Activated naive CD4-positive, alpha-beta T cell treated with anti-CD3 and anti-CD28 coated beads for 36 hours (primary cell): ENCODE measurements at regions of chr12 and their contacts with region 1.

Region 1: DNA sequence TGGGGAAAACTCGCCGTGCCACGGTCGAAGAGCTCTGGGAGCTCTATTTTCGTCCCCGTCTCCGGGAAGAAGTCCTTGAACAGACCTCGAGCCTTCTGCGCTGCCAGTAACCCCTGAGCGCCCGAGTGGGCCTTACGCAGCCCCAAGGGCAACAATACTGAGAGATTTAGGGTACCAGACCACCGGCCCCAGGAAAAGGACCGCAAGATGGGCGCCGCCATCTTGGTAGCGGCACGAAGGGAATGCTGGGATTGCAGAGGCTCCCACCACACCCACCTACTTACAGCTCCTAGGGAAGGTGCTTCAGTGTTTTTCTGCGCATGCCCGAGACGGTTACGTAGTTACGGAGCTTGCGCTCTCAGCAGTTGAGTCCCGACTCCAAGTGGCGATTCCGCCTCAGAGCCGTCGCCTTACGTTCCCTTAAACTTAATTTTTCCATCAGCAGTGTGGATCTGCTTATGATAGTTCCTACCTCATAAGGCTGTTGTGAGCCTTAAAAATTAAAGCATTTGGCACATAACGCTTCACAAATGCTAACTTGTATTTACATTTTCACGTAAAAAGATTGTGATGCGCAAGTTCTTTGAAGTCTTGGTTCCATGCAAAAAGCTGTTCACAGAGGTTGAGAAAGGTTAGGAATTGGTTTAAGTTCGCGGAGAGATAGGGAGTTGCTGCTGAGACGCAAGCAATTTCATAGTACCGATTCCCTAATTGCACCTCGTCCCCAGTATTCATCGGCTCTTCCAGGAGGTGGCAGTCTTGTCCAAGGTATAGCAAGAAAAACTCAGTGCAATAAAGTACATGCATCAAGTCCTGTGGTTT is at the start of gene YARS2:
- DNase-seq: peak; percentile 95
- H3K4me3 Mint-ChIP-seq: peak within 1 kb of the TSS; percentile 89
- H3K27ac Mint-ChIP-seq: peak within 1 kb of the TSS; percentile 92
- H3K4me1 Mint-ChIP-seq: peaks cover 16% of the 10 kb centered on the region
- H3K27me3 Mint-ChIP-seq: no peaks in the 10 kb centered on the region
- total RNA-seq, gene YARS2: 20.1 to 24.8 TPM

Region 2: DNA sequence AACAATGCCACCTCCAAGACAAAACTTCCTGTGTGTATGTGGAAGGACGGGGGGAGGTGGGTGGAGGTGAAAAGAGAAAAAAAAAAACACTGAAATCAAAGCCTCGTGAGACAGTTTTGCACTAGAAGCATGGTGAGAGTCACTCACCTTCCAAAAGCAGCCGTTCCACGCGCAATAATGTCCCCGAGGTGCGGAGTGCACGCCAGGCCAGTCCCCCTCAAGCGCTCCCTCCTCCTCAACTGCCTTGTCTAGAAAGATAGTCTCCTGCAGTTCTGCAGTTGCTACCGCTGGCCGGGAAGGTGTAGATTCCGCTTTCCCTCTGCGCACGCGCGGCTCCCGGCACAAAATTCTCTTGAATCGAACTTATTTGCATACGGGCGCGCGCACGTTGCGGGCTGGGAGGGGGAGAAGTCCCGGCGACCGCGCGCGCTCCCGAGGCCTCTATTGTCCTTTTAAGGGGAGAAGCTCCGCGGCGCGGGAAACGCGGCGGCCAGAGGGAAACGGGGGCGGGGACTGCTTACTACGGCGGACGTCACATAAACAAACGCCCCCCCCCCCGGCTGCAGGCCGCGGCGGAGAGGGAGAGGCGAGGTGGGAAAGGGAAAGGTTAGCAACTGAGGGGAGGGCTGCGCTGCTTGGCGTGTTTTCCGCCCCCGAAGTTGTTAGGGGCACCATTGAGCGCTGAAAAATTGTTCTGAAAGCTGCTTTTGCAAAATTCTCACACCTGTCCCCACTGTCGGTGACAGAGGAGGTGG is 1429.8 kb before region 1 on chr12 and contains the start of gene SINHCAF:
- CTCF ChIA-PET with region 1: no interaction called
- intact Hi-C with region 1: loop called (anchors 5 kb)
- DNase-seq: peak; percentile 99
- H3K4me3 Mint-ChIP-seq: peak within 1 kb of the TSS; percentile 96
- H3K27ac Mint-ChIP-seq: peak within 1 kb of the TSS; percentile 99
- H3K4me1 Mint-ChIP-seq: peaks cover 20% of the 10 kb centered on the region
- H3K27me3 Mint-ChIP-seq: no peaks in the 10 kb centered on the region
- total RNA-seq, gene SINHCAF: 158 to 169 TPM

Region 3: DNA sequence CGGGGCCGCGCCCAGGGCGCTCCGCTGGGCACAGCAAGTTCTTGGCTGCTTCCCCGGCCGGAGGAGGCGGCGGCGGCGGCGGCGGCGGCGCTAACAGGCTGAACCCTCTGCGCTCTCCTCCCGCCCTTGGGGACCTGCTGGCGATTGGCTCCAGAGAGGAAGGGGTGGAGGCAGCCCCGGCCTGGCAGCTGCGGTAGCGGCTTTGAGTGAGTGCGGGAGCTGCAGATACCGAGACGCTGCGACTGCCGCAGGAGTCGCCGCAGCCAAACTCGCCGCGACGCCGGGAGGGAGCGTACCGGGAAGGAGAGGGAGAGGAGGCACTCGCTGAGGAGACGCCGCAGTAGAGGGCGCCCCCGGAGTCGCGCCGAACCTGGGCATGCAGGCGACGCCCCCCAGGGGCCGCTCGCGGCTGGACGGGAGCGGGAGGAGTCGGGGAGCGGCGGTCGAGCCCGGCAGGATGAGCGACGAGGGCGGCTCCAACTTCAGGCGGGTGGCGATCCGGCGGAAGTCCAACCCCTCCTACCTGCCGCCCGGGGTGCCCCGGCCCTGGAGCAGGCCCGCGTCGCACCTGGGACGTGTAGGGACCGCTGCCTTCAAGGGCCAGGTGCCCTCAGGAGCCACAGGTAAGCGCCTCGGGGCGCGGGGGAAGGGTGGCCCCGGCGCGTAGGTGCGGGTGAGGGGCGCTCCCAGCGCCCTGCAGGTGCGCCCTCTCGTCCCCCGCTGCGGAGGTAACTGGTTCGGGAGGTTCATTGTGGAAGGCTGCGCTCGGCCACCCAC is 356.3 kb before region 1 on chr12 and contains the start of gene FGD4:
- CTCF ChIA-PET with region 1: no interaction called
- intact Hi-C with region 1: loop called (anchors 1 kb)
- DNase-seq: peak; percentile 76
- H3K4me3 Mint-ChIP-seq: peak within 1 kb of the TSS; percentile 88
- H3K27ac Mint-ChIP-seq: no peak within 1 kb of the TSS
- H3K4me1 Mint-ChIP-seq: no peaks in the 10 kb centered on the region
- H3K27me3 Mint-ChIP-seq: peaks cover 38% of the 10 kb centered on the region
- total RNA-seq, gene FGD4: 0.15 to 0.17 TPM

Region 4: DNA sequence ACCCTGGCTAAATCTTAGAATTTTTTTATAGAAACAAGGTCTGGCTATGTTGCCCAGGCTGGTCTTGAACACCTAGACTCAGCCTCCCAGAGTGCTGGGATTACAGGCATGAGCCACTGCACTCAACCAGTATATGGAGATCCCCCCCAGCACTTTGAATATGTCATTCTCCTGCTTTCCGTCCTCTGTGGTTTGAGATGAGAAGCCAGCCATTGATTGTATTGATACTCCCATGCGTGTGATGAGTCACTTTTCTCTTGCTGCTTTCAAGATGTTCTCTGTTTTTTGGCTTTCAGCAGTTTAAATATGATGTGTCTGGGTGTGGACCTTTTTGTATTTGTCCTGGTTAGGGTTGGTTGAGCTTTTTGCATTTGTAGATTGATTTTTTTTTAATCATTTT is 152.0 kb before region 1 on chr12:
- CTCF ChIA-PET with region 1: no interaction called
- intact Hi-C with region 1: loop called (anchors 1 kb)
- DNase-seq: peak; percentile 73
- H3K4me3 Mint-ChIP-seq: no peak overlapping the region
- H3K27ac Mint-ChIP-seq: peak overlapping the region; percentile 57
- H3K4me1 Mint-ChIP-seq: peaks cover 8% of the 10 kb centered on the region
- H3K27me3 Mint-ChIP-seq: no peaks in the 10 kb centered on the region

Region 5: DNA sequence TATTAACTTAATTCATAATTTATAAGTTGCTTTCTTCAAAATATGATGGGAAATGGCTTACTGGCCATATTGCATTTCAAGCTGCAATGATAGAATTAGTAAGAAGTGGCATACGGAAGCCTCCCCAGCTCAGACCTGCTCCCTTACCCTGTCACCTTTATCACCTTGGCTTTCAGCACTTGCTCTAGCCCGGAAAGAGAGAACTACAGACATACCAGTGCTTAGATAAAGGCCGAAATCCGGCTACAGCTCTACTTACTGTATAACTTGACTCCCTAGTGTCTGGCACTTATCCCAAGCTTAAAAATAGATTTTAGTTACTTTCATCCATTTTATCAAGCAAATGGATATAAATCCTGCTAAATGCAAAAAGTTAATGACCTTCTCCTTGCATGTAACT is 98.2 kb after region 1 on chr12:
- CTCF ChIA-PET with region 1: no interaction called
- intact Hi-C with region 1: no loop called
- DNase-seq: no peak
- H3K4me3 Mint-ChIP-seq: no peak overlapping the region
- H3K27ac Mint-ChIP-seq: no peak overlapping the region
- H3K4me1 Mint-ChIP-seq: no peaks in the 10 kb centered on the region
- H3K27me3 Mint-ChIP-seq: peaks cover 2% of the 10 kb centered on the region

Region 6: GRCh38 chr12:32896432-32897273 is 140.8 kb after region 1 on chr12 and contains the start of gene PKP2:
- CTCF ChIA-PET with region 1: interaction called, 3 read pairs
- intact Hi-C with region 1: loop called (anchors 5 kb)
- DNase-seq: peak; percentile 34
- H3K4me3 Mint-ChIP-seq: peak within 1 kb of the TSS; percentile 65
- H3K27ac Mint-ChIP-seq: no peak within 1 kb of the TSS
- H3K4me1 Mint-ChIP-seq: peaks cover 18% of the 10 kb centered on the region
- H3K27me3 Mint-ChIP-seq: peaks cover 53% of the 10 kb centered on the region
- total RNA-seq, gene PKP2: 0.22 to 0.26 TPM

Region 7: GRCh38 chr12:34022079-34022830 is 1266.4 kb after region 1 on chr12 and contains the start of gene ALG10:
- CTCF ChIA-PET with region 1: interaction called, 49 read pairs
- intact Hi-C with region 1: loop called (anchors 1 kb)
- DNase-seq: peak; percentile 98
- H3K4me3 Mint-ChIP-seq: peak within 1 kb of the TSS; percentile 96
- H3K27ac Mint-ChIP-seq: peak within 1 kb of the TSS; percentile 95
- H3K4me1 Mint-ChIP-seq: peaks cover 18% of the 10 kb centered on the region
- H3K27me3 Mint-ChIP-seq: no peaks in the 10 kb centered on the region
- total RNA-seq, gene ALG10: 21.6 to 23.9 TPM